ENCODE measurements at regions of chr2 and their contacts with region 1.

Region 1: GRCh38 chr2:190088917-190089316 is 26.4 kb upstream of the MSTN start:
- DNase-seq: peak; percentile 24 to 77 (median 30)
- ATAC-seq: peak; percentile 79
- H3K4me3 ChIP-seq: no peak overlapping the region
- H3K27ac ChIP-seq: no peak overlapping the region
- H3K4me1 ChIP-seq: no peaks in the 10 kb centered on the region; a peak in 2 of 5 replicates
- H3K27me3 ChIP-seq: no peaks in the 10 kb centered on the region
- CTCF ChIP-seq: peak; percentile 61 to 77 (median 65); a peak in 5 of 6 replicates
- EP300 ChIP-seq: no peak
- POLR2A ChIP-seq: no peak
- RAD21 ChIP-seq: peak; percentile 86 to 90

Region 2: DNA sequence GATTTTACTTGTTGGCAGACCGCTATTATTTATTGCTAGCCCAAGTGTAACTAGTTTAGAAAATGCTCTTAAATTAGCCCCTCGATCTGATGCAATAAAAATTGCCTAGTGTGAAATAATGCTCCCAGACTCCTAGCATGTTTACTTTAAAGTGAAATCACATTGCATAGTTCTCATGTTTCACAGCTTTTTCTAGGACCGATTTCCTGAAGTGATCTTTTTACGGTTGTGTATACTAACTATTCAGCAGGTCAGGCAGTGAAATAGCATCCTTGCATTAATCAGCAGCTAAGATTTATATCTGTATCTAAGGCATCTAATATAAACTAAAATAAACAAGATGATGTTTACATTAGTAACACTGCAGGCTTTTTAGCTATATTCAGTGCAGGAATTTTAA is 252.3 kb before region 1 on chr2:
- CTCF ChIA-PET with region 1: no interaction called
- POLR2A ChIA-PET with region 1: no interaction called
- in situ Hi-C with region 1: no loop called
- intact Hi-C with region 1: no loop called
- DNase-seq: no peak
- ATAC-seq: no peak
- H3K4me3 ChIP-seq: no peak overlapping the region
- H3K27ac ChIP-seq: no peak overlapping the region
- H3K4me1 ChIP-seq: no peaks in the 10 kb centered on the region
- H3K27me3 ChIP-seq: no peaks in the 10 kb centered on the region
- CTCF ChIP-seq: no peak
- EP300 ChIP-seq: no peak
- POLR2A ChIP-seq: no peak
- RAD21 ChIP-seq: no peak

Region 3: DNA sequence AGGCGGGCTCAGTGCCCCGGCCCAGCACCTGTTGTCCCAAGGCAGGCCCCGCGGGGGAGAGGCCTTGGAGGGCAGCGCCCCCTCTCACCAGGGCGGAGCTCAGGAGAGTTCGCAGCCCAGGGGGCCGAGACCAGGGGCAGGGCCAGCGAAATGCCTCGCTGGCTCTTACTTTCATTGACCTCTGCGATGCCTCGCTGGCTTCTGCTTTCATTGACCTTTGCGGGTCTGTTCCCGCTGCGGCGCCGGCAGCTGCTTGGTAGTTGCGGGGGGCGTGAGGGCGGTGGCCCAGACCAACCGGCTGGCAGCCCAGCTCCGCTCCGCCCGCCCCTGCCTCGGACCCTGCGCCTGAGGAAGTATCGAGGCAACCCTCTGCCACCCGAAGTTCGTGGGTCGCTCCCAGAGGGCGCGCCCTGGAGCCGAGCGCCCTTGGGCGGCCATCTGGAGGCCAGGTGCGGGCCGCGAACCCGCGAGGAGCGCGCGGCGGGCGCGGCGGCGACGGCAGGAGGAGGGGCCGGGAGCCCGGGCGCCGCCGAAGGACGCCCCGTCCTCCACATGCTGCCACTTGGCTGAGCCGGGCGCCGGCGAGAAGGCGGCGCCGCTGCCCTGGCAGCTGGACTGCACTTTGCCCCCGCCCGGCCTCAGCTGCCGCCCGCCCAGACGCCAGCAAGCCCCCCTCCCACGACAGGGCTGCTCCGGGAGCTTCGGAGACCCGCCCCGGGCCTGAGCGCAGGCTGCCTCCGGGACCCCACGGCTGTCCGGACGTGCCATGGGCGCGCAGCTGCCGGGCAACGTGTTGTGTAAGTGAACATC is 91.6 kb after region 1 on chr2:
- CTCF ChIA-PET with region 1: interaction called, 3 read pairs
- POLR2A ChIA-PET with region 1: no interaction called
- in situ Hi-C with region 1: no loop called
- intact Hi-C with region 1: loop called (anchors 1 kb)
- DNase-seq: peak; percentile 83 to 88 (median 84)
- ATAC-seq: peak; percentile 83
- H3K4me3 ChIP-seq: peak overlapping the region; percentile 75
- H3K27ac ChIP-seq: peak overlapping the region; percentile 84
- H3K4me1 ChIP-seq: peaks cover 14 to 17% of the 10 kb centered on the region in 2 experiments; a peak in 4 of 5 replicates
- H3K27me3 ChIP-seq: no peaks in the 10 kb centered on the region
- CTCF ChIP-seq: peak; percentile 75 to 87 (median 77)
- EP300 ChIP-seq: no peak
- POLR2A ChIP-seq: peak; percentile 71
- RAD21 ChIP-seq: no peak; a peak in 1 of 4 replicates

Region 4: GRCh38 chr2:190235101-190235500 is 146.2 kb after region 1 on chr2:
- CTCF ChIA-PET with region 1: no interaction called
- POLR2A ChIA-PET with region 1: no interaction called
- in situ Hi-C with region 1: no loop called
- intact Hi-C with region 1: no loop called
- DNase-seq: no peak
- ATAC-seq: no peak
- H3K4me3 ChIP-seq: no peak overlapping the region
- H3K27ac ChIP-seq: no peak overlapping the region
- H3K4me1 ChIP-seq: no peaks in the 10 kb centered on the region
- H3K27me3 ChIP-seq: no peaks in the 10 kb centered on the region
- CTCF ChIP-seq: no peak
- EP300 ChIP-seq: no peak
- POLR2A ChIP-seq: no peak
- RAD21 ChIP-seq: no peak

Region 5: GRCh38 chr2:190301032-190301431 is 212.1 kb after region 1 on chr2:
- CTCF ChIA-PET with region 1: no interaction called
- POLR2A ChIA-PET with region 1: no interaction called
- in situ Hi-C with region 1: loop called (anchors 10 kb)
- intact Hi-C with region 1: no loop called
- DNase-seq: peak in 1 of 4 experiments; percentile 14
- ATAC-seq: no peak
- H3K4me3 ChIP-seq: no peak overlapping the region
- H3K27ac ChIP-seq: no peak overlapping the region
- H3K4me1 ChIP-seq: peaks cover 0 to 2% of the 10 kb centered on the region in 2 experiments; a peak in 2 of 5 replicates
- H3K27me3 ChIP-seq: no peaks in the 10 kb centered on the region
- CTCF ChIP-seq: no peak
- EP300 ChIP-seq: no peak
- POLR2A ChIP-seq: no peak
- RAD21 ChIP-seq: no peak

Region 6: DNA sequence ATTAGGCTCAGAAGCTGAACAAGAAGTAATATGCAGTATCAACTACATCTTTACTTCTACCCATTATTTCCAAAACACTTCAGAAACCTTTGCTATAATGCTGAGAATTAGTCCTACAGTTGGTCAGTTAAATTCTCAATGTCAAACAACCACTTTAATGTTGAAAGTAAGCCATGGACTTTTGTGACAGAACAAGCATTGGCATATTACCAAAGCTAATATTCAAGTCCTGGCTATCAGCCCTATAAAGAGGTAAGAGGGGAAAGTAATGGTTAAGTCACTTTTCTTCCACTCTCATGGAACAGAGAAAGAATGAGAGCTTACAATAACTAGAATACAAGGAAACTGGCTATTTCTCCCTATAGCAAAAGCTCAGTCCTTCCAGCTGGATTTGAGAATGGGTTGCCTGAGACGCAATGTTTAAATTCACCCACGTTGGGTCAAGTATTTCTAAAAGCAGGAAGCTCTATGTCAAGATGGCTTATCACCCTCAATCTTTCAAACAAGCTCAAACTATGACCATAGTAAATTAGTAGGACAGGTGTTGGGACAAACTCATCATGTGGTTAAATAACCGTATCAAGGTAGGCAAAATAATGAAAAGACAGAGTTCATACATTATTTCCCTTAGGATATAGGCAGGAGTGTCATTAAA is 287.8 kb after region 1 on chr2:
- CTCF ChIA-PET with region 1: no interaction called
- POLR2A ChIA-PET with region 1: no interaction called
- in situ Hi-C with region 1: no loop called
- intact Hi-C with region 1: loop called (anchors 2 kb)
- DNase-seq: no peak
- ATAC-seq: no peak
- H3K4me3 ChIP-seq: no peak overlapping the region
- H3K27ac ChIP-seq: no peak overlapping the region
- H3K4me1 ChIP-seq: peaks cover 5 to 32% of the 10 kb centered on the region in 2 experiments; a peak in 4 of 5 replicates
- H3K27me3 ChIP-seq: no peaks in the 10 kb centered on the region
- CTCF ChIP-seq: no peak
- EP300 ChIP-seq: no peak
- POLR2A ChIP-seq: no peak
- RAD21 ChIP-seq: no peak

Region 7: GRCh38 chr2:190679813-190680591 is 591.1 kb after region 1 on chr2:
- CTCF ChIA-PET with region 1: no interaction called
- POLR2A ChIA-PET with region 1: no interaction called
- in situ Hi-C with region 1: loop called (anchors 10 kb)
- intact Hi-C with region 1: no loop called
- DNase-seq: peak; percentile 27 to 70 (median 40)
- ATAC-seq: peak; percentile 97
- H3K4me3 ChIP-seq: no peak overlapping the region
- H3K27ac ChIP-seq: no peak overlapping the region
- H3K4me1 ChIP-seq: peaks cover 0 to 10% of the 10 kb centered on the region in 2 experiments; a peak in 2 of 5 replicates
- H3K27me3 ChIP-seq: no peaks in the 10 kb centered on the region
- CTCF ChIP-seq: peak; percentile 62 to 71 (median 65)
- EP300 ChIP-seq: no peak
- POLR2A ChIP-seq: no peak
- RAD21 ChIP-seq: peak; percentile 45 to 70

Measured in K562 (cell line).